Adrenal gland (tissue), 19 donors: ENCODE measurements at regions of chr7 and their contacts with region 1.

Region 1: GRCh38 chr7:2019607-2020511 is 212.9 kb downstream of the MAD1L1 start:
- DNase-seq: peak; percentile 54 to 80 (median 68)
- H3K4me3 ChIP-seq: peak overlapping the region in 1 of 4 donors; percentile 37
- H3K27ac ChIP-seq: peak overlapping the region; percentile 13 to 93 (median 65)
- H3K4me1 ChIP-seq: peaks cover 25 to 26% of the 10 kb centered on the region in 2 donors
- H3K27me3 ChIP-seq: no peaks in the 10 kb centered on the region
- CTCF ChIP-seq: no peak
- POLR2A ChIP-seq: peak in 1 of 2 donors; percentile 48

Region 2: DNA sequence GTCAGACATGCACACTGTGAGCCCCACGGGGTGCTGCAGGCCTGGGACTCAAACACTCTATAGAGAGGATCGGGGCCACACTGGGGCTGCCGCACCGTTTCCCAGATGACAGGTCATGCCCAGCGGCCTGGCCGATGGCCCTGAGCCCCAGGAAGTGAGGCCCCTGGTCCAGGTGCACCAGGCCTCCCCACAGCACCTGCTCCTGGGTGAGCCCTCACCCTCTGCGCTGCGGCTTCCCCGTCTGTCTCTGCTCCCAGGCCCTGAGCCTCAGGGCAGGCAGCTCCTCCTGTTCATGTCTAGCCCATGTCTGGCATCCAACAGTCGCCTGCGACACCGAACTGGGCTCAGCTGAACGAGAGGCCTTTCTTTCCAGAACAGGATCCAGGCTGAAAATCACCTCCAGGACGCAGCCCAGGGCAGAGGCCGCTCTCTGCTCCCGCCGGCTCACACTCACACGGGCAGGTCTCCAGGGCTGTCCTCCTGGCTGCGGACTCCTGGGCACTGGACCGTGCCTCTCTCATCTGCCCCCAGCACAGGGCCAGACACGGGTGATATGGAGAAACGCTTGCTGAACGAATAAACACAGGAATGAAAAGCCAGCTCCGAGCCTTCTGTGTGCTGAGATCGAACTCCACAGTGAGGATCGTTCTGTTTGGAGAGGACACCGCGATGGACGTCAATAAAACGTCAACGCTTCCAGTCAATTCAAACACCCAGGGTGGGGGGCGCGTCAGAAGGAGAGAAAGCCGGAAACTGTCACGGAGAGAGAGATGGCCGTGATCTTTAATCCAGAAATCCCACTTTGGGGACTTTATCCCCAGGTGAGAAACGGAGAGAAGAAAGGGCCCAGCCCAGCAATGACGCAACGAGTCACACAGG is 147.4 kb before region 1 on chr7:
- intact Hi-C with region 1: no loop called
- DNase-seq: no peak
- H3K4me3 ChIP-seq: no peak overlapping the region
- H3K27ac ChIP-seq: no peak overlapping the region
- H3K4me1 ChIP-seq: no peaks in the 10 kb centered on the region
- H3K27me3 ChIP-seq: no peaks in the 10 kb centered on the region
- CTCF ChIP-seq: no peak
- POLR2A ChIP-seq: no peak

Region 3: DNA sequence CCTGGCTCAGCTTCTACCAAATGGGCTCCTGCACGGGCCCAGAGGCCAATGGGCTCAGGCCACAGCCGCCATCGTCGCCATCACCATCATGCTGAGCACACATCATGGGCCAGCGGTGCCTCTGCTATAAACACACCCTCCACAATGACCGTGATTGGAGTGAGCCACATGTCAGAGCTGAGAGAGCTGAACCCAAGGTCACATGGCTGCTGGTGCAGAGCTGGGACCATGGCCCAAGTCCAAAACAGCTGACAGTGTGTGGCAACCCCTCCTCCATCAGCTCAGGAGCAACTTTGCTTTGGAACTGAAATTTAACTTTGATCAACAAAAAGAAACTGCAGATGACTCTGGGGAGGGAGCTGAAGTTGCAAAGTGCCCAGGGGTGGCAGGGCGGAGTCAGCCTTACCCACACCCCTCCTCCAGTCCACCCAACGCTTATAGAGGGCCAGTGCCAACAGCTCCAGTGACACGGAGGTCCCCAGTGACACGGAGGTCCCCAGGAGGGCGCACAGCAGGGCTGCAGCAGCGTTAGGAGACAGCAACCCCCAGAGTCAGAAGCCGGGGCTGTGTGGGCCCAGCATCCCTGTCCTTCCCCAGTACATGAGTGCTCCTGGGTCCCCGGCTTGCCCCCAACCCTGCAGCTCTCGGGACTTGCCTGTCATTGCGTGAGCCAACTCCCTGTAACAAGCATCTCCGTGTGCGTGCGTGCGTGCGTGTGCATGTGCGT is 100.2 kb before region 1 on chr7:
- intact Hi-C with region 1: loop called in 1 of 2 experiments (anchors 10 kb)
- DNase-seq: peak; percentile 81 to 96 (median 90)
- H3K4me3 ChIP-seq: peak overlapping the region in 1 of 4 donors; percentile 36
- H3K27ac ChIP-seq: peak overlapping the region in 1 of 5 donors; percentile 40
- H3K4me1 ChIP-seq: peaks cover 4 to 6% of the 10 kb centered on the region in 2 donors
- H3K27me3 ChIP-seq: no peaks in the 10 kb centered on the region
- CTCF ChIP-seq: no peak
- POLR2A ChIP-seq: no peak